ENCODE measurements at regions of chr2 and their contacts with region 1.

Region 1: DNA sequence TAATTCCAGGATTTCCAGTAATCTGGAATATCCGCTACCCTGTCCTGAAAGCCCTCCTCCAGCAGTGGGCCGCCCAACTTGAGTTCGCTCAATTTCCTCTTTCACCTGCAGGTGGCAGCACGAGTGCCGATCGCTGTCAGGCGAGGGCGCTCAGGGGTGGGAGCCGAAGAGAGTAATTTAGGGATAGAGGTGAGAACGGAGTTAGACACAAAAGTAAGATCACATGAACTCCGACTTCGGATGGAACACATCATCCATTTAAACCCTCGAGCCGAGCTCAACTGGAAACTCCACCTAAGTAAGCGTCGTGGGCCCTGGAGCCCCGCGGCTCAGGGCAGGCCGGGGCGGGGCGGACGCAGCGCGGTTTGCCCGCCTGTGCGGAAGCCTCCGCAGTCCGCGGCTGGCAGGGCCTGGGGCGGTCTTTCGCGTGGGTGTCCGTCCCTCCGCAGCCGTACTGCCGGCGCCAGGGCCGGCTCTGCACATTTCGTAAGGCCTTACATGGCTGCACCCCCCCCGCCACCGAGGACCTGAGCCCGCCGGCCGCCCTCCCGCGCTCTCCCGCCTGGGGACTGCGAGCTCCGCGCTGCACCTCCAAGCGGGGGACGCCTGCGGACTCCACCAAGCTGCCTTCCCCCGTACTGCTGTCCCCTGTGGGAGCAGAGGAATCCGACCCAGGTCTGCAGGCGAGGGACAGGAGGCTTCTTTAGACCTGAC is 61.2 kb downstream of the SEMA4F start:
- DNase-seq: peak; percentile 75
- ATAC-seq: peak; percentile 89
- H3K4me3 Mint-ChIP-seq: peak overlapping the region; percentile 87
- H3K27ac Mint-ChIP-seq: no peak overlapping the region
- H3K4me1 Mint-ChIP-seq: peaks cover 8% of the 10 kb centered on the region
- H3K27me3 Mint-ChIP-seq: peaks cover 12% of the 10 kb centered on the region
- CTCF ChIP-seq: no peak

Region 2: DNA sequence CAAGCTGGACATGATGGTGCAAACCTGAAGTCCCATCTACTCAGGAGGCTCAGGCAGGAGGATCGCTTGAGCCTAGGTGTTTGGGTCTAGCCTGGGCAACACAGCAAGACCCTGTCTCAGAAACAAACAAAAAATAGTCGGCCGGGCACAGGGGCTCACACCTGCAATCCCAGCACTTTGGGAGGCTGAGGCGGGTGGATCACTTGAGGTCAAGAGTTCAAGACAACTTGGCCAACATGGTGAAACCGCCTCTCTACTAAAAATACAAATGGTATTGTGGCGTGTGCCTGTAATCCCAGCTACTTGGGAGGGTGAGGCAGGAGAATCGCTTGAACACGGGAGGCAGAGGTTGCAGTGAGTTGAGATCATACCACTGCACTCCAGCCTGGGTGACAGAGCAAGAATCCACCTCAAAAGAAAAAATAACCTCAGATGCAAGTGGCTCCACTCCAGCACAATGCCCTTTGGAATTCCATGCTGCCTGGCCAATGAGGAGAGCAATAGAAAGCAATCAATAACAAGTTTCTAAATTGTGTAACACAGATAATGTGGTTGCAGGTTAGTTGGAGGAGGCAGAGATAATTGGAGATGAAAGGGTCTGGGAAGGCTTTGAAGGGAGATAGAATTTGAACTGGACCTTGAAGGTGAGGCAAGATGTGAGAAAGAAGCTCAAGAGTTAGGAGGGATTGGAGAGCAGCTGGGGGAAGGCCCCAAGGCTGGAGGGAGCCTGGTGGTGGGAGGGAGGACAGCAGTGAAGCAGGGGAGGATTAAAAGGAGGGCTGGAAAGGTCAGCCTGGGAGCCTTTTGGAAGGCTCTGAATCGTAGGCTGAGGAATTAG is 226.4 kb before region 1 on chr2:
- CTCF ChIA-PET with region 1: no interaction called
- POLR2A ChIA-PET with region 1: no interaction called
- intact Hi-C with region 1: no loop called
- DNase-seq: no peak
- ATAC-seq: no peak
- H3K4me3 Mint-ChIP-seq: no peak overlapping the region
- H3K27ac Mint-ChIP-seq: no peak overlapping the region
- H3K4me1 Mint-ChIP-seq: peaks cover 4% of the 10 kb centered on the region
- H3K27me3 Mint-ChIP-seq: no peaks in the 10 kb centered on the region
- CTCF ChIP-seq: no peak

Region 3: GRCh38 chr2:74617122-74617521 is 98.1 kb before region 1 on chr2:
- CTCF ChIA-PET with region 1: no interaction called
- POLR2A ChIA-PET with region 1: no interaction called
- intact Hi-C with region 1: no loop called
- DNase-seq: no peak
- ATAC-seq: no peak
- H3K4me3 Mint-ChIP-seq: no peak overlapping the region
- H3K27ac Mint-ChIP-seq: no peak overlapping the region
- H3K4me1 Mint-ChIP-seq: peaks cover 20% of the 10 kb centered on the region
- H3K27me3 Mint-ChIP-seq: peaks cover 23% of the 10 kb centered on the region
- CTCF ChIP-seq: no peak

Region 4: DNA sequence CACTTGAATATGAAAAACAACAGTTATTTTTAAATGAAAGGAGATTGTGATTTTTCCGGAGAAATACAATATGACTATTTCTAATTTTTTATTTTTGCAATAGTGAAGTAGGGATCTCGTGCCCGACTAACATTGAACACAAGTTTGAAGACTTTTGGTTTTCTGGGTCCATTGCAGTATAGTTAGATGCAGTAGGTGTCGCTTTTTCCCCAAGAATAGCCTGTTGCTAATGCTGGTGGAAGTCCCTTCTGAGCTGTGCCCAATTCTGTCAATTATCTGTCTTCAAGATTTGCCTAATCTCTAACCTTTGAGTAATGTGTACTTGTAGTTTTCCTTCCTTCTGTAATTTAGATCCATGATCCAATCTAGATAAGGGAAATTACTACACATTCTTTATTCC is 24.7 kb before region 1 on chr2:
- CTCF ChIA-PET with region 1: interaction called, 5 read pairs
- POLR2A ChIA-PET with region 1: no interaction called
- intact Hi-C with region 1: loop called (anchors 1 kb)
- DNase-seq: no peak
- ATAC-seq: peak; percentile 50
- H3K4me3 Mint-ChIP-seq: no peak overlapping the region
- H3K27ac Mint-ChIP-seq: no peak overlapping the region
- H3K4me1 Mint-ChIP-seq: no peaks in the 10 kb centered on the region
- H3K27me3 Mint-ChIP-seq: peaks cover 6% of the 10 kb centered on the region
- CTCF ChIP-seq: peak; percentile 5

Region 5: GRCh38 chr2:74935975-74936391 is 220.7 kb after region 1 on chr2:
- CTCF ChIA-PET with region 1: no interaction called
- POLR2A ChIA-PET with region 1: no interaction called
- intact Hi-C with region 1: no loop called
- DNase-seq: no peak
- ATAC-seq: no peak
- H3K4me3 Mint-ChIP-seq: no peak overlapping the region
- H3K27ac Mint-ChIP-seq: no peak overlapping the region
- H3K4me1 Mint-ChIP-seq: no peaks in the 10 kb centered on the region
- H3K27me3 Mint-ChIP-seq: no peaks in the 10 kb centered on the region
- CTCF ChIP-seq: no peak

Measured in activated B cell treated with CpG ODN at 0.5 μM for 24 hours (primary cell).